ENCODE measurements at regions of chr13 and their contacts with region 1.

Region 1: GRCh38 chr13:106536244-106537034 is 977 bp upstream of the EFNB2 start:
- DNase-seq: peak; percentile 83
- ATAC-seq: peak; percentile 22
- H3K4me3 ChIP-seq: peak overlapping the region; percentile 47
- H3K27ac ChIP-seq: no peak overlapping the region
- H3K4me1 ChIP-seq: peaks cover 4% of the 10 kb centered on the region; the same call in 1 of the 2 replicates
- H3K27me3 ChIP-seq: no peaks in the 10 kb centered on the region
- CTCF ChIP-seq: peak; percentile 96
- POLR2A ChIP-seq: no peak
- RAD21 ChIP-seq: peak; percentile 93

Region 2: DNA sequence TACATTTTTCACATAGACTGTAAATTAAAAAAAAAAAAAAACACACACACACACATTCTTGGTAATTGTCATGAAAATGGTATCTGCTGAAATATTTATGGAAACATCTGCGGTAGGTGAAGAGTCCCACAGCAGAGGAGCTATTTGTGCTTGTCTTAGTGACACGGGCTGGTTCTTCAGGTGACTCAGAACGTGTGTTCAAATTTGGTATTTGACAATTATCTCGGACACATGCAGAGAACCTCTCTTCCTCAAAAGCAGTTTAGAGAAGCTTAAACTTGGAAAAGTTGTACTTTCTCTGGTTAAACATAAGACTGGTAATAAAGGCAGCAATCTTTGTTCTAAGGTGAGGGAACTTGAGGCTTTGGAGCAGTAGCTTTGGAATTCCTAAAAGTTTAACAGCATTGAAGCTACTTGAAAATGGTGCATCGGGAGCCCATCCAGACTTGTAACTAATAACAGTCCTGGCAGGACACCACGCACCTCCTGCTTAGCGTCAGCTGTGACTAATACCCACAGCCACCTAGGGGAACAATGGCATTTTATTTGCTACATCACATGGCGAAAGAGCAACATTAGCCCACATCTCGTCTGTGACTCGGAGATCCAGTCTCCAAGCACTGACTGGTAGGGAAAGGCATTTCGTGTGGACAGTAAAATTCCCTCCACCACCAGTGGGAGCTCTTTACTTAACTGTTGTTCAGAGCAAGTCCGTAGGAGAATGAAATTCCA is 1965.1 kb before region 1 on chr13:
- CTCF ChIA-PET with region 1: interaction called, 5 read pairs
- POLR2A ChIA-PET with region 1: no interaction called
- dilution Hi-C with region 1: no loop called
- in situ Hi-C with region 1: loop called (anchors 10 kb)
- intact Hi-C with region 1: loop called (anchors 1 kb)
- DNase-seq: peak; percentile 82
- ATAC-seq: peak; percentile 99
- H3K4me3 ChIP-seq: no peak overlapping the region
- H3K27ac ChIP-seq: no peak overlapping the region
- H3K4me1 ChIP-seq: peaks cover 1% of the 10 kb centered on the region; the same call in 1 of the 2 replicates
- H3K27me3 ChIP-seq: no peaks in the 10 kb centered on the region
- CTCF ChIP-seq: peak; percentile 73
- POLR2A ChIP-seq: no peak
- RAD21 ChIP-seq: peak; percentile 76

Region 3: GRCh38 chr13:105202354-105202753 is 1334.1 kb before region 1 on chr13:
- CTCF ChIA-PET with region 1: no interaction called
- POLR2A ChIA-PET with region 1: no interaction called
- dilution Hi-C with region 1: no loop called
- in situ Hi-C with region 1: no loop called
- intact Hi-C with region 1: loop called (anchors 5 kb)
- DNase-seq: peak; percentile 47
- ATAC-seq: peak; percentile 85
- H3K4me3 ChIP-seq: no peak overlapping the region
- H3K27ac ChIP-seq: no peak overlapping the region
- H3K4me1 ChIP-seq: no peaks in the 10 kb centered on the region
- H3K27me3 ChIP-seq: no peaks in the 10 kb centered on the region
- CTCF ChIP-seq: peak; percentile 54
- POLR2A ChIP-seq: no peak
- RAD21 ChIP-seq: peak; percentile 52

Region 4: GRCh38 chr13:105442941-105443340 is 1093.5 kb before region 1 on chr13:
- CTCF ChIA-PET with region 1: no interaction called
- POLR2A ChIA-PET with region 1: no interaction called
- dilution Hi-C with region 1: no loop called
- in situ Hi-C with region 1: loop called (anchors 25 kb)
- intact Hi-C with region 1: loop called (anchors 10 kb)
- DNase-seq: peak; percentile 100
- ATAC-seq: peak; percentile 79
- H3K4me3 ChIP-seq: no peak overlapping the region
- H3K27ac ChIP-seq: no peak overlapping the region
- H3K4me1 ChIP-seq: no peaks in the 10 kb centered on the region
- H3K27me3 ChIP-seq: no peaks in the 10 kb centered on the region
- CTCF ChIP-seq: no peak
- POLR2A ChIP-seq: no peak
- RAD21 ChIP-seq: no peak

Region 5: DNA sequence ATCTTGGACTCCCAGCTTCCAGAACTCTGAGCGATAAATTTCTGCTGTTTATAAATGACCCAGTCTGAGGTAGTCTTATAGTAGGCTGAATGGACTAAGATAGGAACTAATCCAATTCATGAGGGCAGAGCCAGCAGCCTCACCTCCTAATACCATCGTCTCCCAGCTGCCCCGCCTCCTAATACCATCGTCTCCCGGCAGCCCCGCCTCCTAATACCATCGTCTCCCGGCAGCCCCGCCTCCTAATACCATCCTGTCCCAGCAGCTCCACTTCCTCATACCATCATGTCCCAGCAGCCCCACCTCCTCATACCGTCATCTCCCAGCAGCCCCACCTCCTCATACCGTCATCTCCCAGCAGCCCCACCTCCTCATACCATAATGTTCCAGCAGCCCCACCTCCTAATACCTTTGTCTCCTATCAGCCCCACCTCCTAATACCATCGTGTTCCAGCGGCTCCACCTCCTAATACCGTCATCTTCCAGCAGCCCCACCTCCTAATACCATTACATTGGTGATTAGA is 33.9 kb after region 1 on chr13:
- CTCF ChIA-PET with region 1: no interaction called
- POLR2A ChIA-PET with region 1: no interaction called
- dilution Hi-C with region 1: no loop called
- in situ Hi-C with region 1: no loop called
- intact Hi-C with region 1: no loop called
- DNase-seq: peak; percentile 61
- ATAC-seq: peak; percentile 39
- H3K4me3 ChIP-seq: no peak overlapping the region
- H3K27ac ChIP-seq: no peak overlapping the region
- H3K4me1 ChIP-seq: peaks cover 3% of the 10 kb centered on the region; the same call in 1 of the 2 replicates
- H3K27me3 ChIP-seq: no peaks in the 10 kb centered on the region
- CTCF ChIP-seq: no peak
- POLR2A ChIP-seq: no peak
- RAD21 ChIP-seq: no peak

Region 6: GRCh38 chr13:106589716-106590115 is 53.3 kb after region 1 on chr13:
- CTCF ChIA-PET with region 1: no interaction called
- POLR2A ChIA-PET with region 1: interaction called, 11 read pairs
- dilution Hi-C with region 1: no loop called
- in situ Hi-C with region 1: no loop called
- intact Hi-C with region 1: no loop called
- DNase-seq: peak; percentile 52
- ATAC-seq: no peak
- H3K4me3 ChIP-seq: no peak overlapping the region
- H3K27ac ChIP-seq: no peak overlapping the region
- H3K4me1 ChIP-seq: no peaks in the 10 kb centered on the region
- H3K27me3 ChIP-seq: no peaks in the 10 kb centered on the region; the same call in 1 of the 2 replicates
- CTCF ChIP-seq: no peak
- POLR2A ChIP-seq: no peak
- RAD21 ChIP-seq: no peak

Region 7: DNA sequence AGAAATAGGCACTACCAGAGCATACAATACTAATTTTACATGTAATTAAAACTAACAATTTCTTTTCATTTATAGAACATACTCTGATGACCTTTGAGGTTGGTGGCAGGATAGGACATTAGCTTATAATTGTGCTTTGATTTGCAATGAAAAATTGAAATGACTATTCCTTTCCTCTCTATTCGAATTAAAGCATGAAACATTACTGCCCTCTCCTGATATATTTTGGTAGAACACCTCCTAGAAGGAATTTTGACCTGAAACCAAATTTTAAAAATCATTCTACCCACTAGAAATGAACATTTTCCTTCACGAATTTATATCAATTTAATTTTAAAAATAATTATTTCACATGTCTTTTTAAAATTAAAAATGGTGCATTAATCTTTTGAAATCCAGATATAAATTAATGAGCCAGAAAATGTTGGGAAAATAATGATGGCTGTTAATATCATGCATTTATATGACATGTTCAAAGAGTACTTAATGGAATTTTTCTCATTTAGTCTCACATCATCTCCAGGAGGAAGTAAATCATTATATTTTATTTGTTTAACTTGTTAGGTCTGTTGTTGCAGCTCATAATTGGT is 587.8 kb after region 1 on chr13:
- CTCF ChIA-PET with region 1: no interaction called
- POLR2A ChIA-PET with region 1: no interaction called
- dilution Hi-C with region 1: no loop called
- in situ Hi-C with region 1: no loop called
- intact Hi-C with region 1: loop called (anchors 1 kb)
- DNase-seq: peak; percentile 36
- ATAC-seq: peak; percentile 66; the same call in 1 of the 2 replicates
- H3K4me3 ChIP-seq: no peak overlapping the region
- H3K27ac ChIP-seq: no peak overlapping the region
- H3K4me1 ChIP-seq: no peaks in the 10 kb centered on the region
- H3K27me3 ChIP-seq: peaks cover 5% of the 10 kb centered on the region
- CTCF ChIP-seq: peak; percentile 79
- POLR2A ChIP-seq: no peak
- RAD21 ChIP-seq: peak; percentile 88